ENCODE measurements at regions of chr2 and their contacts with region 1.

Region 1: DNA sequence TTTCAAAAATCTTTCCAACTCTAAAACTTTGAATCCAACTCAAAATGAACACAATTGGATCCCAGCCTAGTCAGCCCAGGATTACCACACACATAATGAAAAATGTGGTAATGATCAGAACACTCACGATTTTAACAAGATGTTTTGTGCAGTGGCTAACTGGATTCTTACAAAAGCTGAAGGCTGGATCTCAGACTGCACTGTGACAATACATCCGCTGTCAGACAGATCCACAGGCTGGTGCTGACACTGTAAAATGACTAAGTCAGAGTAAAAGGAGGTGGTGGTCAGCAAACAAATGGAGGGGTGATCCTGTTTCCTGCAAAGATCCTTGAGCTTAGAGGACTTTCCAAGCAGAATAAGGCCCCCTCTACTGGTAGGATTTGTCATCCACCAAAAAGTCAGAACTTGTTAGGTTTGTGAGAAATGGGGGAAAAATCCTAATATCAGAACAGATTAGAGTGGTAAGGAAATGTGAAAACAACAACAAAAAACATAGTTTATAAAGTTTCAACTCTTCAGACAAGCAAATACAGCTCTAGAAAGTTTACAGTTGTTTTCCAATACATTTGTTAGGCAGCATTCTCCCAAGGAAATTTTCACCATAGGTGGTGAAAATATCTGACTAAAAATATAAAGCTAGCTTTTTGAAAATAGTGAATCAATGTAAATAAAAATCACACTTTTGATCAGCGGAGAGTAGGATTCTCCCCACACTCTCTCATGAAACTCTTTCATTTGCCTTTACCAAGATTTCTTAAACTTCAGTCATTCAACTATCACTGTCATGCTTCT is 211.9 kb downstream of the AGPS start:
- DNase-seq: no peak

Region 2: DNA sequence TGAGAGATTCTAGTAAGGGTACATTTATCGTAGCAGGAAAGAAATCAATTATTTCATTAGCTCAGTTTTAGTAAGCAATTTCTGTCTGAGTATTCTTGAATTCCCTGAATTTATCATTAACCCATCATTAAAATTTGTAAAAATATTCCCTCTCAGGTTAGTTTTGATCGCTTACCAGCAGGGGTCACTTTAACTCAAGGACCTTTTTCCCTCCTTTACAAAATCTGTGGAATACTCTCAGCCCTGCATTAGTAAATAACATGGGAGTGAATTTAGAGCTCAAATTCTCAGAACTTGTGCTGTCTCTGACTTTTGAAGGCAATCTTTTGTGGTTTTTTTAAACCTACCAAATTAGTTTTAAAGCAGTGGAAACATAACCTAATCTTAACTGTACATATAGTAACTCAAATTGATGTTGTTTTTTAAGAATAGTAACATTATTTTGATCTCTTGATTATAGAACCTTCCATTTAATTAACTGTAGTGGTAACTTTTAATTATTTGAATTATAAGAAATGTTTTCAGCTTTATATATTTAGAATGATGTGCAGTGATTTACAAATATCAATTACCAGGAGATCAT is 114.7 kb before region 1 on chr2:
- intact Hi-C with region 1: loop called (anchors 1 kb)
- DNase-seq: no peak